Activated CD4-positive, alpha-beta memory T cell treated with anti-CD3 and anti-CD28 coated beads, Interleukin-2, amount 10 ng/mL, durations not matched to agents 7 days and 5 days (primary cell): ENCODE measurements at regions of chr17 and their contacts with region 1.

Region 1: GRCh38 chr17:40098846-40099618 is 1.4 kb downstream of the NR1D1 start:
- DNase-seq: peak; percentile 98
- H3K4me3 Mint-ChIP-seq: peak overlapping the region; percentile 77
- H3K27ac Mint-ChIP-seq: peak overlapping the region; percentile 92
- H3K4me1 Mint-ChIP-seq: peaks cover 88% of the 10 kb centered on the region
- H3K27me3 Mint-ChIP-seq: no peaks in the 10 kb centered on the region

Region 2: GRCh38 chr17:40086150-40087044 is 12.6 kb before region 1 on chr17:
- CTCF ChIA-PET with region 1: interaction called, 11 read pairs
- POLR2A ChIA-PET with region 1: interaction called, 4 read pairs
- DNase-seq: peak; percentile 54
- H3K4me3 Mint-ChIP-seq: no peak overlapping the region
- H3K27ac Mint-ChIP-seq: no peak overlapping the region
- H3K4me1 Mint-ChIP-seq: no peaks in the 10 kb centered on the region
- H3K27me3 Mint-ChIP-seq: no peaks in the 10 kb centered on the region

Region 3: GRCh38 chr17:40121181-40122135 is 22.4 kb after region 1 on chr17 and contains the start of gene MSL1:
- CTCF ChIA-PET with region 1: interaction called, 10 read pairs
- POLR2A ChIA-PET with region 1: interaction called, 35 read pairs
- DNase-seq: peak; percentile 86
- H3K4me3 Mint-ChIP-seq: peak within 1 kb of the TSS; percentile 78
- H3K27ac Mint-ChIP-seq: peak within 1 kb of the TSS; percentile 74
- H3K4me1 Mint-ChIP-seq: peaks cover 39% of the 10 kb centered on the region
- H3K27me3 Mint-ChIP-seq: no peaks in the 10 kb centered on the region
- total RNA-seq, gene MSL1: 102 to 103 TPM

Region 4: GRCh38 chr17:40278414-40278813 is 179.4 kb after region 1 on chr17:
- CTCF ChIA-PET with region 1: no interaction called
- POLR2A ChIA-PET with region 1: no interaction called
- DNase-seq: no peak
- H3K4me3 Mint-ChIP-seq: no peak overlapping the region
- H3K27ac Mint-ChIP-seq: peak overlapping the region; percentile 7
- H3K4me1 Mint-ChIP-seq: peaks cover 35% of the 10 kb centered on the region
- H3K27me3 Mint-ChIP-seq: no peaks in the 10 kb centered on the region